Vagina (tissue), 2 donors: ENCODE measurements at regions of chr5 and their contacts with region 1.

Region 1: DNA sequence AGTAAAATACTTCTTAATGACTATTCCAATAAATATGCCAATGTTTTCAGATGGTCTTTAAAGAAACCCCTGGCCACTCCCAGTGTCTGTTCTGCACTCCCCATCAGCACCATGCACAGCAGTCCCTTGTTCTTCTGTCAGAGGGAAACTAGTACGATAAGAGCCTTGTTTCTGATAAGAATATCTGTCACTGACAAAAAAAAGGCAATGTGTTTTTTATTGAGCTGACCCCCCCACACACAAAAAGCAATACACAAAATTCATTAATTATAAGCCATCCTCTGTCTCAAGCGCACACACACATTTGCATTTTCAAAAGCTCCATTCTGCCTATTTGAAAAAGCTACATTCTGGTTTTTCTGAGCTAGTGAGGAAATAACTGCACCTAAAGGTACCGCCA is 119.1 kb downstream of the ENC1 start:
- DNase-seq: no peak
- H3K4me3 ChIP-seq: no peak overlapping the region
- H3K27ac ChIP-seq: no peak overlapping the region
- H3K4me1 ChIP-seq: no peaks in the 10 kb centered on the region
- H3K27me3 ChIP-seq: no peaks in the 10 kb centered on the region
- CTCF ChIP-seq: no peak
- POLR2A ChIP-seq: no peak

Region 2: DNA sequence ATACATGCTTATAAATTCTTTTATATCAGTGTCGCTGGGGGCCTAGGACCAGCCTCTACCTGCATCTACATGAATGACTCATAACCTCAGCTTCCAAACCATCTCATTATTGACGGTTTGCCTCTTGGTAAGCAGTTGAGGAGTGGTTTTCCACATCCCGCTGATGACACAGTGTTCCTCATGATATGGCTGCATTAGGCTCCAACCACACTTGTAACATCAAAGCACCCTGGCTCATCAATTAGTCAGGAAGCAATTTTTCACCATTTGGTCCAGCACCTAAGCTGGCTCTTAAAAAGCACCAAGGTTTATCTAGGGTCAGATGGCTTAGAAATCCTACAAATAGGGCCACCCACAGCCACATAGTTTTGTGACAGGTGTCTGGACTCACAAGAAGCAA is 493.0 kb before region 1 on chr5:
- intact Hi-C with region 1: no loop called
- DNase-seq: no peak
- H3K4me3 ChIP-seq: no peak overlapping the region
- H3K27ac ChIP-seq: no peak overlapping the region
- H3K4me1 ChIP-seq: no peaks in the 10 kb centered on the region
- H3K27me3 ChIP-seq: no peaks in the 10 kb centered on the region
- CTCF ChIP-seq: no peak
- POLR2A ChIP-seq: no peak

Region 3: DNA sequence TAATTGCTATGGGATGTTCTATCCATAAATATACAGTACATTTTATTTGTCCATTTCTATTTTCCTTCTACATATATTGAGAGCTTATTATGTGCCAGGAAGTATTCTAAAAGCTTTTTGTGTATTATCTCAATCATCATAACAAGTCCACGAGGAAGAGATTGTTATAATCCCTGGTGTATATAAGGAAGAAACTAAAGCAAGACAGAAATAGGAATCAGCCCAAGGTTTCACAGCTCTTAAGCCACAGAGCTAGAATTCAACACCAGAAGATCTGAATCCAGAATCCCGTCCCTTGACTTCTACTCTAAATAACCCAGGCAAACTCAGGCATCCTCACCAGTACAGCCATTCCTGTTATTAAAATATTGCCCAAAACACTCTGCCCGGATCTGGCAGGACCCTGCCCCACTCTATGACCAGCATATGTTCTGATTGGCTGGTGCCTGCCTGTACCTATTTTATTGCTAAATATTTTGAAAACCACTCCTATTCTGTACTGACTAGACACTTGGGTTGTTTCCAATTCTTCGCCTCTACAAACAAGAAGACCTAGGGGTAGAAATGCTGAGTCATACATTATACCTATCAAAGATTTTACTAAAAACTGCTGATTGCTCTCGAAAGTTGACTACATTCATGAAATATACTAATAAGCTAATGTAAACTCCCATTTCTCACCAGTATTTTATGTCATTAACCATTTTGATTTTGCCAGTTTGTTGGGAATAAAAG is 178.3 kb before region 1 on chr5:
- intact Hi-C with region 1: loop called (anchors 5 kb)
- DNase-seq: no peak
- H3K4me3 ChIP-seq: no peak overlapping the region
- H3K27ac ChIP-seq: no peak overlapping the region
- H3K4me1 ChIP-seq: no peaks in the 10 kb centered on the region
- H3K27me3 ChIP-seq: no peaks in the 10 kb centered on the region
- CTCF ChIP-seq: no peak
- POLR2A ChIP-seq: no peak

Region 4: GRCh38 chr5:74382987-74383593 is 138.3 kb before region 1 on chr5:
- intact Hi-C with region 1: no loop called
- DNase-seq: no peak
- H3K4me3 ChIP-seq: no peak overlapping the region
- H3K27ac ChIP-seq: peak overlapping the region; percentile 3
- H3K4me1 ChIP-seq: peaks cover 10% of the 10 kb centered on the region
- H3K27me3 ChIP-seq: no peaks in the 10 kb centered on the region
- CTCF ChIP-seq: no peak
- POLR2A ChIP-seq: no peak